Motor neuron (in vitro differentiated cells): ENCODE measurements at regions of chr22 and their contacts with region 1.

Region 1: GRCh38 chr22:17576470-17576869 is 13.2 kb downstream of the SLC25A18 start:
- ATAC-seq: peak in 7 of 8 experiments; percentile 17 to 95 (median 60)
- H3K4me3 ChIP-seq: no peak overlapping the region
- H3K27ac ChIP-seq: no peak overlapping the region
- H3K4me1 ChIP-seq: peaks cover 0 to 10% of the 10 kb centered on the region in 2 donors

Region 2: GRCh38 chr22:17699696-17700340 is 123.3 kb after region 1 on chr22:
- in situ Hi-C with region 1: loop called in 1 of 9 experiments (anchors 25 kb)
- ATAC-seq: no peak
- H3K4me3 ChIP-seq: no peak overlapping the region
- H3K27ac ChIP-seq: no peak overlapping the region
- H3K4me1 ChIP-seq: no peaks in the 10 kb centered on the region